ENCODE measurements at regions of chr16 and their contacts with region 1.

Region 1: GRCh38 chr16:84504420-84505248 is at the start of gene MEAK7:
- DNase-seq: peak; percentile 99
- ATAC-seq: peak; percentile 96
- H3K4me3 Mint-ChIP-seq: peak within 1 kb of the TSS; percentile 89
- H3K27ac Mint-ChIP-seq: peak within 1 kb of the TSS; percentile 90
- H3K4me1 Mint-ChIP-seq: peaks cover 39% of the 10 kb centered on the region
- H3K27me3 Mint-ChIP-seq: no peaks in the 10 kb centered on the region
- total RNA-seq, gene MEAK7: 8.9 to 10.6 TPM

Region 2: DNA sequence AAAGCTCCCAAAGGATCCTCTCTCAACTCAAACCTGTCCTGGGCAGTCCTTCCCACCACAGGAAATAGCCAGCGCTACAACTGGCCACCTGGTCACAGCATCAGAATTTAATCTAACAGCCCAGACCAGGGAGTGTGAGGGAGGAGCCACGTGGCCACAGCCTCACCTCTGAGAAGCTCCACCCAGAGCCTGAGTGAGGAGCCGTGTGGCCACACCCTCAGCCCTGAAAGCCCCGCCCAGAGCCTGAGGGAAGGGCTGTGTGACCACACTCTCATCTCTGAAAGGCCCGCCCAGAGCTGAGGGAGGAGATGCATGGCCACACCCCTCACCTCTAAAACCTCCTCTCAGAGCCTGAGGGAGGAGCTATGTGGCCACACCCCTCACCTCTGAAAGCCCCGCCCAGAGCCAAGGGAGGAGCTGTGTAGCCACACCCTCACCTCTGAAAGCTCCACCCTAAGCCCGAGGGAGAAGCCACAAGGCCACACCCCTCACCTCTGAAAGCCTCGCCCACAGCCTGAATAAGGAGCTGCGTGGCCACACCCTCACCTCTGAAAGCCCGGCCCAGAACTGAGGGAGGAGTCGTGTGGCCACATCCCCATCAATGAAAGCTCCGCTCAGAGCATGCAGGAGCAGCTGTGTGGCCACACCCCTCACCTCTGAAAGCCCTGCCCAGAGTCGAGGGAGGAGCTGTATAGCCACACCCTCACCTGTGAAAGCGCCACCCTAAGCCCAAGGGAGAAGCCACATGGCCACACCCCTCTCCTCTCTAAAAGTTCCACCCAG is 490.7 kb before region 1 on chr16:
- CTCF ChIA-PET with region 1: no interaction called
- POLR2A ChIA-PET with region 1: no interaction called
- intact Hi-C with region 1: loop called in 1 of 2 experiments (anchors 1 kb)
- DNase-seq: peak; percentile 91
- ATAC-seq: peak; percentile 90
- H3K4me3 Mint-ChIP-seq: no peak overlapping the region
- H3K27ac Mint-ChIP-seq: no peak overlapping the region
- H3K4me1 Mint-ChIP-seq: peaks cover 9% of the 10 kb centered on the region
- H3K27me3 Mint-ChIP-seq: no peaks in the 10 kb centered on the region

Region 3: GRCh38 chr16:84144859-84145639 is 359.6 kb before region 1 on chr16 and contains the starts of genes DNAAF1 and HSDL1:
- CTCF ChIA-PET with region 1: no interaction called
- POLR2A ChIA-PET with region 1: no interaction called
- intact Hi-C with region 1: loop called in 1 of 2 experiments (anchors 1 kb)
- DNase-seq: peak; percentile 96
- ATAC-seq: peak; percentile 84
- H3K4me3 Mint-ChIP-seq: peak within 1 kb of the TSS; percentile 95
- H3K27ac Mint-ChIP-seq: peak within 1 kb of the TSS; percentile 72
- H3K4me1 Mint-ChIP-seq: peaks cover 12% of the 10 kb centered on the region
- H3K27me3 Mint-ChIP-seq: peaks cover 4% of the 10 kb centered on the region
- total RNA-seq, gene DNAAF1: 0.39 TPM in 1 of 2 experiments, not detected in the other
- total RNA-seq, gene HSDL1: 7.4 to 11.4 TPM

Region 4: GRCh38 chr16:84518748-84519341 is 14.2 kb after region 1 on chr16:
- CTCF ChIA-PET with region 1: interaction called, 12 read pairs
- POLR2A ChIA-PET with region 1: interaction called, 5 read pairs
- intact Hi-C with region 1: loop called in 1 of 2 experiments (anchors 1 kb)
- DNase-seq: peak; percentile 74
- ATAC-seq: peak; percentile 25
- H3K4me3 Mint-ChIP-seq: no peak overlapping the region
- H3K27ac Mint-ChIP-seq: peak overlapping the region; percentile 63
- H3K4me1 Mint-ChIP-seq: peaks cover 61% of the 10 kb centered on the region
- H3K27me3 Mint-ChIP-seq: no peaks in the 10 kb centered on the region

Region 5: DNA sequence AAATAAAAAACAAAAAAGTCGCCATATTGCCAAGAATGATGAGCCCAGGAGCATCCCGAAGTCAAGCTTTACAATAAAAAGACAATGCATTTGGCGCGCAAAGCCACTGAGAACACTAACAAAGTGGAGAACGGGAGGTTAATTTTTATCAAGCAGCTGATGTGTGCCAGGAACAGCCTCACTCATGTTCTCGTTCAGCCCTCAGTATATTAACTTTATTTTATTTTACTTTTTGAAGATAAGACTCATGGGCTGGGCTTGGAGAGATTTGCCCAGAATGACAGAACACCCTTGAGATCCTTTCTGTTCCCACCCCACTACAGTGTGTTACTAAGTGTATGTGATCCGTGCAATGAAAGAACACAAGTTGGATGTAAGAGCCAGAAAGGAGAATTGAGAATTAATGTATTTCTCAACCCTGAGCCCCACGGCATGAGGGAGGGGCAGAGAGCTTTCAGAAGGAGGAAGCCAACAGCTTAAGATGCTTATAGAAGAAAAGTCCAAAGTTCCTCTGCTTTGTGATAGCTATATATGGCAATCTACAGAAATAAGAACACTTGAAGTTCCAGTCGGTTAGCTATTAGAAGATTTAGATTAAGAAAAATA is 64.9 kb after region 1 on chr16:
- CTCF ChIA-PET with region 1: no interaction called
- POLR2A ChIA-PET with region 1: no interaction called
- intact Hi-C with region 1: no loop called
- DNase-seq: no peak
- ATAC-seq: no peak
- H3K4me3 Mint-ChIP-seq: no peak overlapping the region
- H3K27ac Mint-ChIP-seq: no peak overlapping the region
- H3K4me1 Mint-ChIP-seq: peaks cover 9% of the 10 kb centered on the region
- H3K27me3 Mint-ChIP-seq: no peaks in the 10 kb centered on the region

Region 6: GRCh38 chr16:84647828-84648594 is 143.4 kb after region 1 on chr16 and contains the start of gene KLHL36:
- CTCF ChIA-PET with region 1: no interaction called
- POLR2A ChIA-PET with region 1: interaction called, 5 read pairs
- intact Hi-C with region 1: loop called in 1 of 2 experiments (anchors 1 kb)
- DNase-seq: peak; percentile 79
- ATAC-seq: peak; percentile 85
- H3K4me3 Mint-ChIP-seq: peak within 1 kb of the TSS; percentile 76
- H3K27ac Mint-ChIP-seq: peak within 1 kb of the TSS; percentile 80
- H3K4me1 Mint-ChIP-seq: peaks cover 43% of the 10 kb centered on the region
- H3K27me3 Mint-ChIP-seq: no peaks in the 10 kb centered on the region
- total RNA-seq, gene KLHL36: 31.1 to 43.2 TPM

Region 7: GRCh38 chr16:84819644-84820324 is 315.1 kb after region 1 on chr16 and contains the start of gene CRISPLD2:
- CTCF ChIA-PET with region 1: no interaction called
- POLR2A ChIA-PET with region 1: no interaction called
- intact Hi-C with region 1: loop called in 1 of 2 experiments (anchors 1 kb)
- DNase-seq: peak; percentile 93
- ATAC-seq: peak; percentile 100
- H3K4me3 Mint-ChIP-seq: peak within 1 kb of the TSS; percentile 58
- H3K27ac Mint-ChIP-seq: no peak within 1 kb of the TSS
- H3K4me1 Mint-ChIP-seq: peaks cover 8% of the 10 kb centered on the region
- H3K27me3 Mint-ChIP-seq: peaks cover 13% of the 10 kb centered on the region
- total RNA-seq, gene CRISPLD2: 0.05 to 0.11 TPM

Measured in activated CD4-positive, alpha-beta T cell treated with anti-CD3 and anti-CD28 coated beads for 36 hours (primary cell).